Activated CD4-positive, alpha-beta T cell treated with anti-CD3 and anti-CD28 coated beads for 36 hours (primary cell): ENCODE measurements at regions of chr21 and their contacts with region 1.

Region 1: DNA sequence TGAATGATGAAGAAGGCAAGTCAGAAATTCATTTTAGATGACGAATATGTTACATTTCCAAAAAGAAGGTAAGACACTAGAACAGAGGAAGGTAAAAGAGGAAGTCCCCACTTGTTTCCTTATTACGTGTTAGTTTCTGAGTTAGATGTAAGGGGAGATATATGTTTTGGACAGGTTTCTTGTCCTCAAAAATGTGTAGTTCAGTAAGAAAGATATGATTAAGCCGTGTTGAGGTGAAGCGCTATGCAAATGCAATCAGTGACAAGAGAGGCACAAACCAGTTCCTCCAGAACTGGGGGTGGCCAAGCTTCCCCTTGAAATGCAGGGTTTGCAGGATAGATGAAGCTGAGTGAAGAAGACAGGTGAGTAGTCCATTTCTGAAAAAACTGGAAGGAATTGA is 293.3 kb upstream of the RUNX1 start:
- DNase-seq: peak; percentile 55
- ATAC-seq: peak; percentile 78
- H3K4me3 Mint-ChIP-seq: peak overlapping the region; percentile 59
- H3K27ac Mint-ChIP-seq: peak overlapping the region; percentile 94
- H3K4me1 Mint-ChIP-seq: peaks cover 39% of the 10 kb centered on the region
- H3K27me3 Mint-ChIP-seq: peaks cover 1% of the 10 kb centered on the region

Region 2: GRCh38 chr21:35159881-35160280 is 182.6 kb before region 1 on chr21:
- CTCF ChIA-PET with region 1: no interaction called
- POLR2A ChIA-PET with region 1: no interaction called
- intact Hi-C with region 1: no loop called
- DNase-seq: no peak
- ATAC-seq: no peak
- H3K4me3 Mint-ChIP-seq: no peak overlapping the region
- H3K27ac Mint-ChIP-seq: no peak overlapping the region
- H3K4me1 Mint-ChIP-seq: peaks cover 7% of the 10 kb centered on the region
- H3K27me3 Mint-ChIP-seq: no peaks in the 10 kb centered on the region

Region 3: GRCh38 chr21:35226948-35227744 is 115.3 kb before region 1 on chr21:
- CTCF ChIA-PET with region 1: no interaction called
- POLR2A ChIA-PET with region 1: no interaction called
- intact Hi-C with region 1: loop called (anchors 1 to 2 kb)
- DNase-seq: peak; percentile 73
- ATAC-seq: peak; percentile 83
- H3K4me3 Mint-ChIP-seq: peak overlapping the region; percentile 45
- H3K27ac Mint-ChIP-seq: peak overlapping the region; percentile 85
- H3K4me1 Mint-ChIP-seq: peaks cover 37% of the 10 kb centered on the region
- H3K27me3 Mint-ChIP-seq: no peaks in the 10 kb centered on the region

Region 4: GRCh38 chr21:35256467-35256988 is 85.9 kb before region 1 on chr21:
- CTCF ChIA-PET with region 1: no interaction called
- POLR2A ChIA-PET with region 1: no interaction called
- intact Hi-C with region 1: loop called in 1 of 2 experiments (anchors 5 kb)
- DNase-seq: no peak
- ATAC-seq: no peak
- H3K4me3 Mint-ChIP-seq: no peak overlapping the region
- H3K27ac Mint-ChIP-seq: no peak overlapping the region
- H3K4me1 Mint-ChIP-seq: peaks cover 32% of the 10 kb centered on the region
- H3K27me3 Mint-ChIP-seq: peaks cover 5% of the 10 kb centered on the region

Region 5: DNA sequence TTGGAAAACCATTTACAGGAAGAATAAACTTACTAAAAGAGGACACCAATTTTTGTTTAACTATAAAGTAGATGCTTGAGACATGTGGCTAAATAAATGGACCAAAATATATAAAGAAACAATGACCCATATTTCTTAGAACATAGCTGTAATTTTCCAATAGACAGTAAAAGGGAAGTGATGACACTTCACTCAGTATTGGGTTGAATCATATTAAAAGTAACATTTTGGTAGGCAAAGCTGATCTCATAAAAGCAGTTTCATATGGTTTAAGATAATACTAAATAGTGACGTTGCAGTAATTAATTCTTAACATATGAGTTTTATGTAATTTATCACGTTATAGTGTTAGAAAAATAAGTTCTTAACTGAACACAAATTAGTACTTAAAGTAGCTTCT is 15.6 kb after region 1 on chr21:
- CTCF ChIA-PET with region 1: interaction called, 4 read pairs
- POLR2A ChIA-PET with region 1: no interaction called
- intact Hi-C with region 1: loop called (anchors 1 kb)
- DNase-seq: no peak
- ATAC-seq: peak; percentile 86
- H3K4me3 Mint-ChIP-seq: no peak overlapping the region
- H3K27ac Mint-ChIP-seq: peak overlapping the region; percentile 74
- H3K4me1 Mint-ChIP-seq: peaks cover 15% of the 10 kb centered on the region
- H3K27me3 Mint-ChIP-seq: no peaks in the 10 kb centered on the region

Region 6: GRCh38 chr21:35405981-35406380 is 63.5 kb after region 1 on chr21:
- CTCF ChIA-PET with region 1: no interaction called
- POLR2A ChIA-PET with region 1: no interaction called
- intact Hi-C with region 1: no loop called
- DNase-seq: no peak
- ATAC-seq: no peak
- H3K4me3 Mint-ChIP-seq: no peak overlapping the region
- H3K27ac Mint-ChIP-seq: no peak overlapping the region
- H3K4me1 Mint-ChIP-seq: peaks cover 6% of the 10 kb centered on the region
- H3K27me3 Mint-ChIP-seq: peaks cover 2% of the 10 kb centered on the region

Region 7: GRCh38 chr21:35796844-35797243 is 454.4 kb after region 1 on chr21:
- CTCF ChIA-PET with region 1: no interaction called
- POLR2A ChIA-PET with region 1: no interaction called
- intact Hi-C with region 1: no loop called
- DNase-seq: no peak
- ATAC-seq: no peak
- H3K4me3 Mint-ChIP-seq: no peak overlapping the region
- H3K27ac Mint-ChIP-seq: no peak overlapping the region
- H3K4me1 Mint-ChIP-seq: no peaks in the 10 kb centered on the region
- H3K27me3 Mint-ChIP-seq: peaks cover 3% of the 10 kb centered on the region